ENCODE measurements at regions of chr6 and their contacts with region 1.

Region 1: GRCh38 chr6:29847871-29848630 is 20.4 kb downstream of the HLA-G start:
- H3K4me3 Mint-ChIP-seq: no peak overlapping the region
- H3K27ac Mint-ChIP-seq: no peak overlapping the region
- H3K4me1 Mint-ChIP-seq: peaks cover 9% of the 10 kb centered on the region
- H3K27me3 Mint-ChIP-seq: peaks cover 81% of the 10 kb centered on the region

Region 2: DNA sequence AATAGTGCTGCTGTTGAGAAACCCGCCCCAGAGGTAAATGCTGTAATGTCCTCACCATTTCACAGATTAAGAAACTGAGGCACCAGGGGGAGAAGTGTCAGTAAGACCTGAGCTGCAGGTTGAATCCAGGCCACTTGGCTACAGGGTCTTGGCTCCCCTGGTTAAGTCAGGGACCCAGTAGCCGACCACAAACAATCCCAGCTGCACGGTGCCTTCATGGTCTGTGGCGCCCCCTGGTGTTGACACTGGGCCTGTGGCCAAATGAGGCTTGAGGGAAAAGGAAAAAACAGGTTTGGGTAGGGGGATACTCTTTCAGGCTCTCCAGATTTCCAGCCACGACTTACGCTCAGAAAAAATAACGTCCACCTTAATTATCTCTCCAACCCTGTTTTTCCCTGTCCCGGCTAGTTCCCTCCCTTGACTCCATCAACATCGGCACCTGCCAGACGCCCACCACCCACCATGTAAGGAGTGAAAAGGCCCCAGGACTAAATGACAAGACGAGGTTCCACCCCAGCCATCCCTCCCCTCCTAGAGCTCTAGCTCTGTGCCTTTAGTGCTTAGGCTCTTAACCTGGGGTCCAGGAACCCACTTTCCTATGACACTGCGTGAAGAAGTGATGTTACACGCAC is 165.4 kb after region 1 on chr6:
- intact Hi-C with region 1: loop called (anchors 1 kb)
- H3K4me3 Mint-ChIP-seq: no peak overlapping the region
- H3K27ac Mint-ChIP-seq: no peak overlapping the region
- H3K4me1 Mint-ChIP-seq: no peaks in the 10 kb centered on the region
- H3K27me3 Mint-ChIP-seq: peaks cover 11% of the 10 kb centered on the region

Region 3: DNA sequence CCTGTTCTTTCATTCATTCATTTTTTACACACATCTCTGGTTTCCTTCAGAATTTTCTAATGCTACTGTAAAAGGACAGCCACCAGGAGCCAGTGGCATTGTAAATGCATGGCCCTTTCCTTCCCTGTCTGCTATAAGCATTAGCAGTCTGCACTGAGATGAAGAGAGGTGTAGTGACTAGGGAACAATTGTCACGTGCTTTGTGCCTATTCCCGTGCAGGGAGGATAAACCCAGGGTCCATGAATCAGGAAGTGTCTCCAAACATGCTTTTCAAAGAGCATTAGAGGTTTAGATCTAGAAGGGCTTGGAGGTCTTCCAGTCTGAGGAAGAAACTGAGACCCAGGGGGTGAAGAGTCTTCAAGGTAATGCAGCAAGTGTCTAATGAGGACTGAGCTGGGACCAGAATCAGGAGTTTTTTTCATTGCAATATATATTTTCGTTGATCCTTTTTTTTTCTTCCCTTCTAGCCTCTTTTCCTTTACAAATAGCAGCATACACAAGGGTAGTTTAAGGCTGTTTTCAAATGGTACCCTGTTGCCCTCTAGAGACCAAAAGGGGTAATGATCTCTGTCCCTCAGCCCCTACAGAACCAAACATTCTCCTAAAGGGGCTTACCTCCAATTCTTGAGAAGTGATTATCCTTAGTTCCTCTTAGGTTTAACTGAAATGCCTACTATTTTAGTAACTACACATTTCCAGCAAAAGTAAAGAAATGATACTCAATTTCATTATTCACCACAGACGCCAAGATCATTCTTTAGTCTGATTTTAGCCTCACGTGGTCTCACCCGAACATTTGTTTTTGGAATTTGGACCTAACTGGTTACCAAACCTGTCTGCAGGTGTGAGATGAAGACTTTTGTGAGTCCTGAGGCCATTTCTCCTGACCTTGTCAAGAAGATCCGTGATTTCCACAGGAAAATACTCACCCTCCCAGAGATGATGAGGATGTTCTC is 321.9 kb after region 1 on chr6:
- intact Hi-C with region 1: loop called (anchors 5 kb)
- H3K4me3 Mint-ChIP-seq: no peak overlapping the region
- H3K27ac Mint-ChIP-seq: no peak overlapping the region
- H3K4me1 Mint-ChIP-seq: peaks cover 10% of the 10 kb centered on the region
- H3K27me3 Mint-ChIP-seq: peaks cover 57% of the 10 kb centered on the region

Measured in dendritic cell treated with granulocyte-macrophage colony-stimulating factor and Interleukin-4, amounts not matched to agents 40 ng/mL and 50 ng/mL, for 4 days (primary cell).